ENCODE measurements at regions of chr5 and their contacts with region 1.

Region 1: DNA sequence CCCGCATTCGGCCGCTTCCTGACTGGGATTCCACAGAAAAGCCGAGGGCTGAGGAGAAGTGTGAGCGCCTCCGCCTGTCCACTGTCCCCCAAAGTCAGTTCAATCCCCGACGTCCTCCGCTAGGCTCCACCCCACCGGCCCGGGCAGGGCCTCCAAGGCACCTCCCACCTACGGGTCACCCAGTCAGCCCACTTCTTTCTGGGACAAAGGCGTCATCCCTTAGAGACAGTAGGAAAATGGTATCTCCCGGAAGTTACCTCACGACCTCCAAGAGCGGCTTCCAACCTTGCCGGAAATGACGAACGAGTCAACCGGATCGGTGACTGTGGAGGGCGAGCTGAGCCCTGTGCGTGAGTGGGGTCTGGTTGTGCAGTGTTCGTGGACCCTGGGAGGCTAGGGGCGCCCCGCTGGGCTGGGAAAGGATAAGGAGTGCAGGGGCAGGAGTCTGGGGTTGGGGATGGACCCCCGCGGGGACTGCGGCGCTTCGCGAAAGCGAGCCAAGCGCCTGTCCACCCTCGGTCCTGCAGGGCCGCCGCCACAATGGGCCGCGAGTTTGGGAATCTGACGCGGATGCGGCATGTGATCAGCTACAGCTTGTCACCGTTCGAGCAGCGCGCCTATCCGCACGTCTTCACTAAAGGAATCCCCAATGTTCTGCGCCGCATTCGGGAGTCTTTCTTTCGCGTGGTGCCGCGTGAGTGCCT is at the starts of genes GDF9 and UQCRQ:
- DNase-seq: peak; percentile 79 to 100 (median 89)
- ATAC-seq: peak; percentile 93
- H3K4me3 ChIP-seq: peak within 1 kb of the TSS; percentile 88 to 92
- H3K4me3 Mint-ChIP-seq: peak within 1 kb of the TSS; percentile 100
- H3K27ac ChIP-seq: peak within 1 kb of the TSS; percentile 96 to 97
- H3K27ac Mint-ChIP-seq: peak within 1 kb of the TSS; percentile 100
- H3K4me1 ChIP-seq: peaks cover 14% of the 10 kb centered on the region
- H3K4me1 Mint-ChIP-seq: peaks cover 26% of the 10 kb centered on the region
- H3K27me3 ChIP-seq: no peaks in the 10 kb centered on the region
- H3K27me3 Mint-ChIP-seq: no peaks in the 10 kb centered on the region
- CTCF ChIP-seq: no peak
- total RNA-seq, gene GDF9: 0.43 to 0.72 TPM
- total RNA-seq, gene UQCRQ: 124 to 128 TPM

Region 2: DNA sequence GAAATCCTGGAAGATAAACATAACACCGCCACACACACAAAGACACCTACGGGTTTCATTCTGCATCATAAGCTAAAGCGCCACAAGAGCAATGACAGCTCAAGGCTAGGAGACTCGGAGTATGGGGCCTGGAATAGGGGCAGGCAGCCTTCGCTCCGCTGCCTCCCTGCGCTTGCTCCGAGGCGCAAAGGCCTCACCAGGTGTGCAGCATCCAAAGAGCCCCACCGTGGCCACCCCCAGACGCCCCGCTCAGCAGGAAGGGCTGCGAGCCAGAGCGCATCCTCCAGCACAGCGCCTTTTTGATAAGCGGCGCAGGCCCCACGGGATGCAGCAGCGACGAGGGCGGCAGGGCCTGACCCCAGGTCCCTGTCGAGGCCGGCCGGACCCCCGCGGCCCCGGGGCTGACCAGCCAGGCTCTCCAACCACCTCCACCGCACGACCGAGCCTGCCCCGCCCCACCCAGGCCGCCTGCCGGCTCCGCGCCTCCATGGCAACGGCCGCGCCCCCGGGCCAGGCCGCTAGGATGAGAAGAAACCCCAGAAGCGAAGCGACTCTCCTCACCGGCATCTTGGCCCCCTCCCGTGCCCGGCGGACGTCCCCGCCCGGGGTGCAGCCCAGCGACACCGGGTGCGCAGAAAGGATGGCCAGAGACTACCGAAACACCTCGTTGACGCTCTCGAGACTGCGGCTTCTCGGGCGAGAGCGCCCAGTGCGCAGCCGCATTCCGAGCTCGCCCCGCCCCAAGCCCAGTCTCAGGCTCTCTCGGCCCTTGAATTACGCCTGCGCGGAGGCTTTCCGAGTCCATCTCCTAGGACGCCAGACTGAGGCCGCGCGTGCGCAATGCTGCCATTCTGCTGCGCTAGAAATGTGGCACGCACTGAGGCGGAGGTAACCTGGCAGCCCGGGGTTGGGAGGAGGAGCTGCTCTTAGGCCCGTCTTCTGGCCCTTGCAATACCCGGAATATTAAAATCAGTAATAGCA is 129.4 kb before region 1 on chr5 and contains the start of gene KIF3A:
- CTCF ChIA-PET with region 1: no interaction called
- POLR2A ChIA-PET with region 1: no interaction called
- intact Hi-C with region 1: loop called (anchors 1 to 5 kb)
- DNase-seq: peak; percentile 94 to 99 (median 99)
- ATAC-seq: peak; percentile 89
- H3K4me3 ChIP-seq: peak within 1 kb of the TSS; percentile 80 to 85
- H3K4me3 Mint-ChIP-seq: peak within 1 kb of the TSS; percentile 94
- H3K27ac ChIP-seq: peak within 1 kb of the TSS; percentile 83
- H3K27ac Mint-ChIP-seq: peak within 1 kb of the TSS; percentile 93
- H3K4me1 ChIP-seq: peaks cover 15% of the 10 kb centered on the region
- H3K4me1 Mint-ChIP-seq: peaks cover 30% of the 10 kb centered on the region
- H3K27me3 ChIP-seq: no peaks in the 10 kb centered on the region
- H3K27me3 Mint-ChIP-seq: no peaks in the 10 kb centered on the region
- CTCF ChIP-seq: peak; percentile 30
- total RNA-seq, gene KIF3A: 13.0 to 14.8 TPM

Region 3: GRCh38 chr5:132883261-132883834 is 16.9 kb after region 1 on chr5:
- CTCF ChIA-PET with region 1: interaction called, 4 read pairs
- POLR2A ChIA-PET with region 1: no interaction called
- intact Hi-C with region 1: loop called in 1 of 2 experiments (anchors 2 kb)
- DNase-seq: peak in 5 of 9 experiments; percentile 16 to 69 (median 24)
- ATAC-seq: peak; percentile 69
- H3K4me3 ChIP-seq: no peak overlapping the region
- H3K4me3 Mint-ChIP-seq: no peak overlapping the region
- H3K27ac ChIP-seq: no peak overlapping the region
- H3K27ac Mint-ChIP-seq: peak overlapping the region; percentile 11
- H3K4me1 ChIP-seq: no peaks in the 10 kb centered on the region
- H3K4me1 Mint-ChIP-seq: peaks cover 3% of the 10 kb centered on the region
- H3K27me3 ChIP-seq: no peaks in the 10 kb centered on the region
- H3K27me3 Mint-ChIP-seq: no peaks in the 10 kb centered on the region
- CTCF ChIP-seq: peak; percentile 46

Region 4: GRCh38 chr5:132947671-132948070 is 81.2 kb after region 1 on chr5:
- CTCF ChIA-PET with region 1: no interaction called
- POLR2A ChIA-PET with region 1: no interaction called
- intact Hi-C with region 1: no loop called
- DNase-seq: no peak
- ATAC-seq: no peak
- H3K4me3 ChIP-seq: no peak overlapping the region
- H3K4me3 Mint-ChIP-seq: no peak overlapping the region
- H3K27ac ChIP-seq: no peak overlapping the region
- H3K27ac Mint-ChIP-seq: peak overlapping the region; percentile 8
- H3K4me1 ChIP-seq: peaks cover 24% of the 10 kb centered on the region
- H3K4me1 Mint-ChIP-seq: peaks cover 62% of the 10 kb centered on the region
- H3K27me3 ChIP-seq: no peaks in the 10 kb centered on the region
- H3K27me3 Mint-ChIP-seq: no peaks in the 10 kb centered on the region
- CTCF ChIP-seq: no peak

Region 5: DNA sequence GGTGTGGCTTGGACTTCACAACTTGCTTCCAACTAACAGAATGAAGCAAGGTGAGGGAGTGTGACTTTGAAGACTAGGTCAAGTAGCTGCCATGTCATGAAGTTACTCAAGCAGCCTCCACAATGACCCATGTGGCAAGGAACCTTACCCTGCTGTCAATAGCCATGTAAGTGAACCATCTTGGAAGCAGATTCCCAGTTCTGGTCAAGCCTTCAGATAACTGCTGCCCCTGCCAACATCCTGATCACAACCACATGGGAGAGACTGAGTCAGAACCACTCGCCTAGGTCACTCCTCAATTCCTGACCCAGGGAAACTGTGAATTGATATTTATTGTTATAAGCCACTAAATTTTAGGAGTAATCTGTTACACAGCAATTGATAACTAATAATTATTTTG is 149.0 kb after region 1 on chr5:
- CTCF ChIA-PET with region 1: no interaction called
- POLR2A ChIA-PET with region 1: no interaction called
- intact Hi-C with region 1: no loop called
- DNase-seq: no peak
- ATAC-seq: no peak
- H3K4me3 ChIP-seq: no peak overlapping the region
- H3K4me3 Mint-ChIP-seq: no peak overlapping the region
- H3K27ac ChIP-seq: no peak overlapping the region
- H3K27ac Mint-ChIP-seq: no peak overlapping the region
- H3K4me1 ChIP-seq: no peaks in the 10 kb centered on the region
- H3K4me1 Mint-ChIP-seq: no peaks in the 10 kb centered on the region
- H3K27me3 ChIP-seq: no peaks in the 10 kb centered on the region
- H3K27me3 Mint-ChIP-seq: no peaks in the 10 kb centered on the region
- CTCF ChIP-seq: no peak

Region 6: DNA sequence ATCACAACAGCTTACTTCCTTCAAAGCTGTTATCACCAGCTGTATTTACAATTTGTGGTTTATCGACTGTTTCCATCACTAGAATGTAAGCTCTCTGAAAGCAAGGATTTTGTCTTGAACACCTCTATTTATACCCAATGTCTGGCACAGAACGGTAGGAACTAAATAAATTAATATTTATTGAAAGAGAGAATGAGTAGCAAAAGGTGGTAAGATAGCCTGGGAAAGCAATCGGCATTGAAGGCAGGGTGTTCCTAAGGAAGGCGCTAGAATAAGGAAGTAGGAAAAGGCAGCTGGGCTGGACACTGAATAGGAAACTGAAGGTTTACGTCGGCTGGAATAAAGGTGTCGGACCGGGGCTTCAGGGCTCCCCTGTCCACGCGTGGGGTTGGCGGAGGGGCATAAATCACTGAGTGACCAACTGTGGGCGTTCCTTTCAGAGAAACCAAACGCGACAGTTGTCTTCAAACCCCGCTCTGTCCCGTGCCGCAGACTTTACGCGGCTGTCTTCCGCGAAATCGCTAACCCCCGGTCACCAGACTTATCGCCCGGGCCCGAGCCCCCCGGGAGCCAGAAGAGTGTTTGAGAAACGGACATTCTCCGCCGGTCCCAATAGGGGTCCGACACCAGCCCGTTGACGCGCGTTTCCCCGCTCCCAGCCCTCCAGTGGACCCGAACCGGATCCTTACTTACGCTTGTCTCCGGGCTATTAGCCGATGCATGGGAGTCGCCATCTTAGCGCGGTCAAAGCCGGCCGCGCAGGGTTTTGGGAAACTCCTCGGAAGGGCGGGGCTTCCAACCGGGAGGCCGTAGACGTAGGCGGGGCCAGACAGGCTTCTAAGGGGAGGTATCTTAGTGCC is 159.5 kb after region 1 on chr5 and contains the start of gene ZCCHC10:
- CTCF ChIA-PET with region 1: no interaction called
- POLR2A ChIA-PET with region 1: no interaction called
- intact Hi-C with region 1: loop called in 1 of 2 experiments (anchors 1 kb)
- DNase-seq: peak; percentile 82 to 95 (median 92)
- ATAC-seq: peak; percentile 99
- H3K4me3 ChIP-seq: peak within 1 kb of the TSS; percentile 98 to 100
- H3K4me3 Mint-ChIP-seq: peak within 1 kb of the TSS; percentile 97
- H3K27ac ChIP-seq: peak within 1 kb of the TSS; percentile 86 to 95
- H3K27ac Mint-ChIP-seq: peak within 1 kb of the TSS; percentile 94
- H3K4me1 ChIP-seq: peaks cover 4% of the 10 kb centered on the region
- H3K4me1 Mint-ChIP-seq: peaks cover 25% of the 10 kb centered on the region
- H3K27me3 ChIP-seq: no peaks in the 10 kb centered on the region
- H3K27me3 Mint-ChIP-seq: no peaks in the 10 kb centered on the region
- CTCF ChIP-seq: no peak
- total RNA-seq, gene ZCCHC10: 22.3 to 22.7 TPM

Region 7: DNA sequence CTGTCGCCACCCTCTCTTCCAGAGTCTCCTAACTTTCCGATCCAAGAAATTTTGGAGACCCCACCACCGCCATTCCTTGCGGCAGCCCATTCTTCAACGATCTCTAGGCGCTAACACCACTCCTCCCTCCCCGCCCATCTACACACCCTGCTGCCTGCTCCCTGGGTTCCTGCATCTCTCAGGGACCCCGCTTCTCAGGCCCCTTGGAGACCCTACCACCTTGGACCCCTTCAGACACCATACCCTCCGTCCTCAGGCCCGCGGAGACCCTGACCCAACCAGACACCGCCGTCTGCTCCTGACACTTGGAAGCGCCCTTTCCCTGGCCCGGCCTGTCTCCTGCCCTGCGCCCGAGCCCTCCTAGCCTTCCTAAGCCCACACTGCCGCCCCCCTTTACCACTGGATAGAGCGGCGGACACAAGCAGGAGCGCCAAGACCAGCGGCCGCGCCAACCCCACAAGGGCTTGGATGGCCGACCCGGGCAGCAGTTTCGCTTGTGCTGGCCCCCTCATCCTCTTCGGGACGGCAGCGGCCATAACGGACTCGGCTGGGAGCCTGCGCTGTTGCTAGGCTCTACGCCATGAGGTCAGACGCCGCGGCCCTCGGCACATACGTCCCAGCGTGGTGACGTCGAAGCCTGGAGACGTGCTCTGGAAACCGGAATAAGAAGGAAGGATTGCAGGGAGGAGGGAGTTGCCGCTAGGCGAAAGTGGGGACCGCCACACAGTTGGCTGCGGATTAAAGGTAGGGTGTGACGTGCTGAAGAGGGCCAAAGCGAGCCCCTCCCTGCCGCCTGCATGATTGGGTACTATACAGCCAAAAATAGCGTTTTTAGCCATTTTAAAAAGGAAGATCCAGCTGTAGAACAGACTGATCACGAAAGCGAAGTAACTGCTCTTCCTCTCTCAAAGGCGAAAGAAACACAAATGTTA is 1101.8 kb after region 1 on chr5 and contains the start of gene C5orf15:
- CTCF ChIA-PET with region 1: no interaction called
- POLR2A ChIA-PET with region 1: no interaction called
- intact Hi-C with region 1: loop called in 1 of 2 experiments (anchors 10 kb)
- DNase-seq: peak; percentile 76 to 98 (median 91)
- ATAC-seq: peak; percentile 93
- H3K4me3 ChIP-seq: peak within 1 kb of the TSS; percentile 85 to 93
- H3K4me3 Mint-ChIP-seq: peak within 1 kb of the TSS; percentile 93
- H3K27ac ChIP-seq: peak within 1 kb of the TSS; percentile 79 to 94
- H3K27ac Mint-ChIP-seq: peak within 1 kb of the TSS; percentile 97
- H3K4me1 ChIP-seq: peaks cover 23% of the 10 kb centered on the region
- H3K4me1 Mint-ChIP-seq: peaks cover 49% of the 10 kb centered on the region
- H3K27me3 ChIP-seq: no peaks in the 10 kb centered on the region
- H3K27me3 Mint-ChIP-seq: no peaks in the 10 kb centered on the region
- CTCF ChIP-seq: no peak
- total RNA-seq, gene C5orf15: 12.4 to 13.0 TPM

Region 8: GRCh38 chr5:134637161-134637582 is 1770.7 kb after region 1 on chr5:
- CTCF ChIA-PET with region 1: no interaction called
- POLR2A ChIA-PET with region 1: no interaction called
- intact Hi-C with region 1: loop called in 1 of 2 experiments (anchors 5 kb)
- DNase-seq: no peak
- ATAC-seq: no peak
- H3K4me3 ChIP-seq: no peak overlapping the region
- H3K4me3 Mint-ChIP-seq: no peak overlapping the region
- H3K27ac ChIP-seq: no peak overlapping the region
- H3K27ac Mint-ChIP-seq: no peak overlapping the region
- H3K4me1 ChIP-seq: no peaks in the 10 kb centered on the region
- H3K4me1 Mint-ChIP-seq: peaks cover under 1% of the 10 kb centered on the region
- H3K27me3 ChIP-seq: no peaks in the 10 kb centered on the region
- H3K27me3 Mint-ChIP-seq: no peaks in the 10 kb centered on the region
- CTCF ChIP-seq: no peak